ENCODE measurements at regions of chr5 and their contacts with region 1.

Region 1: DNA sequence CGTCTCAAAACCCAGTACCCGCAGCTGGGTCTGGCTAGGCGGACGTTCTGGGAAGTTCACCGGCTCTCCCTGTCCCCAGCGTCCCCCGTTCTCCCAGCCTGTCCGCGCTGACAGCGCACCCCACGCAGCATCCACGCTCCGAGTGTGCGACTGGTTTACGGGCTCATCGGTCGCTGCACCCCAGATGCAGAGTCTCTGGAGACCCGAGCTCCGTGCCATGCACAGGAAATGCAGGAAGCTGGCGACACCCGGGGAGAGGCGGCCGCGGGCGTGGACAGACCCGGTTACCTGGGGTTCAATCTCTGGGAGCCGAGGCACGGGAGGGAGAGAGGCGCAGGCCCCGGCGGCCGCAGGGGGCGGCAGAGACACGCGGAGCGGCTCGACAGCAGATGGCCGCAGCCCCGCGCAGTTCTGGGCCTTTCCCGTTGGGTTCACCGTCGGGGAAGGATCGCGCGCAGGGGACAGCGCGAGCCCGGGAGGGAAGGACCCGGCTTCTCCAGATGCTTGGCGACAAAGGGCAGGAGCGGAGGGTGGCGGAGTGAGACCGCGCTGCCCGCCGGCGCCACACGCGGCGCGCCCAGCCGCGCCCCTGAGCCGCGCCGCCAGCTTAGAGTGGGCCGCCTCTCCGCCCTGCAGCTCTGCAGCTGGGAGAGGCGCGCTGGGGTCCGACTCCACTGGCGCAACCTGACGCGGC is 558 bp downstream of the SHROOM1 start:
- DNase-seq: peak; percentile 56
- ATAC-seq: peak; percentile 87
- H3K4me3 ChIP-seq: peak overlapping the region; percentile 79 to 94 (median 93)
- H3K27ac ChIP-seq: peak overlapping the region; percentile 90
- H3K4me1 ChIP-seq: peaks cover 61% of the 10 kb centered on the region
- H3K27me3 ChIP-seq: no peaks in the 10 kb centered on the region
- CTCF ChIP-seq: peak; percentile 96
- EP300 ChIP-seq: no peak; a peak in 1 of 4 replicates
- POLR2A ChIP-seq: peak in 1 of 2 experiments; percentile 47; a peak in 1 of 4 replicates
- RAD21 ChIP-seq: peak; percentile 98

Region 2: DNA sequence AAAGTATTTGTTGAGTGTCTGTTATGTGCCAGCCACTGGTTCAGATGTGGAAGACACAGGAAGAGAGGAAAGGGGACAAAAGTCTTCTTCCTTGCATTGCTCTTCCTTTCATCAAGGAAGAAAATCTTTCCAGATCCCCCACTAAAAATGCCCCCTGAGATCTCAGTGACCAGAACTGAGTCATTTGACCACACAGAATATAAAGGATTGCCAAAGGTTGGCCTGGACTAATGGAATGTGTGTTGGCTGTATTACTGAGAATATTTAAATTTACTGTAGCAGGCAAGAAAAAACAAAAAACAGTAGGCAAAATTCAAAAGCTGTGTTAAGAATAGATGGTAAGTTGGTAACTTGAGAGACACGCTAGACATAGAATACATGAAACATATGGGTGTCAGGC is 42.8 kb before region 1 on chr5:
- CTCF ChIA-PET with region 1: no interaction called
- POLR2A ChIA-PET with region 1: no interaction called
- in situ Hi-C with region 1: no loop called
- intact Hi-C with region 1: no loop called
- DNase-seq: no peak
- ATAC-seq: no peak
- H3K4me3 ChIP-seq: no peak overlapping the region
- H3K27ac ChIP-seq: no peak overlapping the region
- H3K4me1 ChIP-seq: peaks cover 20% of the 10 kb centered on the region; the same call in 1 of the 2 replicates
- H3K27me3 ChIP-seq: no peaks in the 10 kb centered on the region
- CTCF ChIP-seq: no peak
- EP300 ChIP-seq: no peak
- POLR2A ChIP-seq: no peak
- RAD21 ChIP-seq: no peak

Region 3: GRCh38 chr5:132873119-132873929 is 43.4 kb after region 1 on chr5 and contains the start of gene LEAP2:
- CTCF ChIA-PET with region 1: no interaction called
- POLR2A ChIA-PET with region 1: interaction called, 91 read pairs
- in situ Hi-C with region 1: loop called (anchors 5 kb)
- intact Hi-C with region 1: no loop called
- DNase-seq: peak; percentile 95
- ATAC-seq: peak; percentile 82
- H3K4me3 ChIP-seq: peak within 1 kb of the TSS; percentile 52 to 76 (median 68)
- H3K27ac ChIP-seq: peak within 1 kb of the TSS; percentile 95
- H3K4me1 ChIP-seq: peaks cover 90% of the 10 kb centered on the region
- H3K27me3 ChIP-seq: no peaks in the 10 kb centered on the region; a peak in 1 of 5 replicates
- CTCF ChIP-seq: peak; percentile 9
- EP300 ChIP-seq: peak; percentile 43 to 90; a peak in 3 of 4 replicates
- POLR2A ChIP-seq: peak; percentile 94 to 95
- RAD21 ChIP-seq: no peak
- total RNA-seq, gene LEAP2: 19.8 and 23.9 TPM in 2 replicates

Region 4: DNA sequence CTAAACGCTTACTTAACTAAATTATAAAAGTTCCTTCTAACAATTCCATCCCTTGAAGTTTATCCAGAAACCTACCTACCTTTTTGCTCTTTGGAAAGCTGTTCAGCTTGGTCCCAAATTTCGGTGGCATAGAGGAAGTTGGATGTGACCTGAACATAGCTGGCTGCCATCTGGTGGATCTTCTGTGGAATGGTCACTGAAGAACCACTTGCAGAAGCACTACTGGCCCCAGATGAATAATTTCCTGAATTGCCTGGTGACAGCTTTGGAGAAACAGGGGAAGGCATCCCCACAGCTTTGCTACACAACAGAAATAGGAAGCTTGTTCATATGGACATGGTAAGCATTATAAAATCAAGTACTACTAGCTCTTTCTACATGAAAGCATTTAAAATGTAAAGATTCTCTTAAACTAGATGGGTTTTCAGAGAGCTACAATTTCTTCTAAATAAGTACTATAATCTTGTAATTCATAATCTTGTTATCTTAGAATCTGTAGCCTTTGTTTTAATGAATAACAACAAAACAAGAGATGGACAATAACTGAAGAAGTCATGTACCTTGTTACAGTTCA is 53.5 kb after region 1 on chr5:
- CTCF ChIA-PET with region 1: interaction called, 39 read pairs
- POLR2A ChIA-PET with region 1: interaction called, 22 read pairs
- in situ Hi-C with region 1: no loop called
- intact Hi-C with region 1: loop called (anchors 1 kb)
- DNase-seq: peak; percentile 78
- ATAC-seq: peak; percentile 94
- H3K4me3 ChIP-seq: no peak overlapping the region
- H3K27ac ChIP-seq: peak overlapping the region; percentile 16
- H3K4me1 ChIP-seq: peaks cover 17% of the 10 kb centered on the region
- H3K27me3 ChIP-seq: no peaks in the 10 kb centered on the region
- CTCF ChIP-seq: peak; percentile 85
- EP300 ChIP-seq: no peak
- POLR2A ChIP-seq: no peak
- RAD21 ChIP-seq: peak; percentile 81